PC-3 (cell line): ENCODE measurements at regions of chr19 and their contacts with region 1.

Region 1: DNA sequence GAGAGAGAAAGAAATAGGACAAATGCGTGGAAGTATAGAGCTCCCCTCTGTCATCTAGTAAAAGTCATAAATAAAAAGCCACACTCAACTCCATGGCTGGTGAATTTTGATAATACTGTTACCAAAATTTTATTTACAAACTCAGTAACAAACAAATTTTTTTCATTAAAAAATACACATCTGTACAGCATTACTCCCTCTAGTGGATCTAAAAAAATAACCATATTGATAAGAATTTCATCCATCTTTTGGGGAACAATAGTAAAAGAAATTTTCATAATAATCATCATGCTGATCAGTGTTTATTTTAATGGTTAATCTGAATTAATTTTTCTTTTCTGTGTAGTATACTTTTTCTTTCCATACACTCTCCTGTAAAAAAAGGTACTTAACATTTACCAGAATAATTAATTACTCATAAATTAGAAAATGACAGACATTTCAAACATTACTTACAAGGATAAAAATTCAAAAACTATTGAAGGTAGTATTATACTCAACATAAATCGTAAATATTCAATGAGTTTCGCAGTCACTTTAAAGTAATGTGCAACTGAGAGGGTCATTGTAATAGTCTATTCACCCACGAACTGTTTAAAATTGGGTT is 173.5 kb upstream of the LSM14A start:
- DNase-seq: peak; percentile 47
- ATAC-seq: no peak
- H3K4me3 ChIP-seq: peak overlapping the region; percentile 56
- H3K27ac ChIP-seq: no peak overlapping the region
- H3K4me1 ChIP-seq: no peaks in the 10 kb centered on the region
- H3K27me3 ChIP-seq: peaks cover 11% of the 10 kb centered on the region; the same call in 1 of the 2 replicates
- CTCF ChIP-seq: peak; percentile 61

Region 2: DNA sequence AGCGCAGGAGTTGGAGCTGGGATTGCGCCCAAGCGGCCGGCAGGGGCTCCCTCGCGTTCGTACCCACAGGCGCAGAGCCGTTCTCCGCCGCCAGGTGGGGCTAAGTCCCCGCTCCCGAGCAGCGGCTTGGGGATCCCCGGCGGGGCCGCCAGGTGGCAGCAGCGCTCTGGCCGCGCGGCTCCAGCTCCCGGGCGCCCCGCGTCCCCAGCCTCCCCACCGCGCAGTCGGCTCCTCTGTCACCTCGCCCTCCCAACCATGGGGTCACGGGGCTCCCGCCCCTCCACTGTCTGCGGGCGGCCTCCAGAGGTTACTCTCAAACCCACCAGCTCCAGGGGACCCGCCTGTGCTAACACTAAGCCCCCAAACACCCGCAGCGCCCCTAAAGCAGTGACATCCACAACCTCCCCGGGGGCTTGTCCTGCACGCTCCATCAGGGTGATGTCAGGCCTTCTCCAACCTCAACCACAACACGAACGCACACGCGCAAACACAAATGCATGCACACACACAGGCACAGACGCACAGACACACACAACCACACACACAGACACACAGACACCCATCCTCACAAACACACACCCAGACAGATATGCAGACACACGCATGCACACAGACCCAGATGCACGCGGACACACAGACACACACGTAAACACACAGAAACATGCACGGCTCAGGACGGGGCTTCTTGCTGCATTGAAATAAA is 220.6 kb before region 1 on chr19:
- CTCF ChIA-PET with region 1: interaction called, 17 read pairs
- POLR2A ChIA-PET with region 1: no interaction called
- intact Hi-C with region 1: loop called (anchors 1 kb)
- DNase-seq: peak; percentile 74
- ATAC-seq: peak; percentile 82
- H3K4me3 ChIP-seq: peak overlapping the region; percentile 51
- H3K27ac ChIP-seq: no peak overlapping the region
- H3K4me1 ChIP-seq: peaks cover 4% of the 10 kb centered on the region; the same call in 1 of the 2 replicates
- H3K27me3 ChIP-seq: no peaks in the 10 kb centered on the region
- CTCF ChIP-seq: peak; percentile 96

Region 3: GRCh38 chr19:33795370-33796163 is 203.3 kb before region 1 on chr19:
- CTCF ChIA-PET with region 1: interaction called, 8 read pairs
- POLR2A ChIA-PET with region 1: interaction called, 3 read pairs
- intact Hi-C with region 1: loop called (anchors 2 kb)
- DNase-seq: peak; percentile 70
- ATAC-seq: peak; percentile 66
- H3K4me3 ChIP-seq: peak overlapping the region; percentile 74
- H3K27ac ChIP-seq: peak overlapping the region; percentile 80
- H3K4me1 ChIP-seq: peaks cover 6% of the 10 kb centered on the region; the same call in 1 of the 2 replicates
- H3K27me3 ChIP-seq: no peaks in the 10 kb centered on the region
- CTCF ChIP-seq: peak; percentile 78

Region 4: DNA sequence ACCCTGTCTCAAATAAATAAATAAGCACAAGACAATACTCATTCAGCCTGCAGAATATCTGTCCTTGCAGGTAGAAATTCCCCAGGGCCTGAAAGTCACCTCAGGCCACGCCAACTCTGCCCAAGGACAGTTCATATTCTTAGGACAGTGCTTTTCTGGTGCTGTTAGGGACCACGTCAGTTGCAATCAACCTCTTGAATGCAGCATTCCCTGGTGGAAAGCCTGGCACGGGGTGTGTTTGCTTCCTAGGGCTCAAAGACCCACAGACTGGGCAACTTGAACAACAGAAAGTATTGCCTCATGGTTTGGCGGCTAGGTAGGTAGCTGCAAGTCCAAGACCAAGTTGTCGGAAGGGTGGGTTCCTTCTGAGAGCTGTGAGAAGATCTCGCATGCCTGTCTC is 41.9 kb before region 1 on chr19:
- CTCF ChIA-PET with region 1: no interaction called
- POLR2A ChIA-PET with region 1: no interaction called
- intact Hi-C with region 1: no loop called
- DNase-seq: no peak
- ATAC-seq: no peak
- H3K4me3 ChIP-seq: no peak overlapping the region
- H3K27ac ChIP-seq: no peak overlapping the region
- H3K4me1 ChIP-seq: no peaks in the 10 kb centered on the region
- H3K27me3 ChIP-seq: peaks cover 8% of the 10 kb centered on the region; the same call in 1 of the 2 replicates
- CTCF ChIP-seq: no peak